IMR-90 (cell line): ENCODE measurements at regions of chr3 and their contacts with region 1.

Region 1: GRCh38 chr3:195806211-195806915 is 5.4 kb downstream of the MUC4 start:
- DNase-seq: no peak
- ATAC-seq: no peak
- H3K4me3 ChIP-seq: no peak overlapping the region
- H3K27ac ChIP-seq: no peak overlapping the region
- H3K4me1 ChIP-seq: no peaks in the 10 kb centered on the region
- H3K27me3 ChIP-seq: peaks cover 62% of the 10 kb centered on the region
- CTCF ChIP-seq: no peak
- POLR2A ChIP-seq: no peak
- RAD21 ChIP-seq: no peak

Region 2: GRCh38 chr3:195732940-195733339 is 73.4 kb before region 1 on chr3:
- CTCF ChIA-PET with region 1: no interaction called
- POLR2A ChIA-PET with region 1: no interaction called
- dilution Hi-C with region 1: no loop called
- in situ Hi-C with region 1: no loop called
- intact Hi-C with region 1: no loop called
- DNase-seq: peak; percentile 36
- ATAC-seq: peak; percentile 25
- H3K4me3 ChIP-seq: no peak overlapping the region
- H3K27ac ChIP-seq: no peak overlapping the region
- H3K4me1 ChIP-seq: no peaks in the 10 kb centered on the region
- H3K27me3 ChIP-seq: peaks cover 58% of the 10 kb centered on the region
- CTCF ChIP-seq: no peak
- POLR2A ChIP-seq: no peak
- RAD21 ChIP-seq: no peak

Region 3: DNA sequence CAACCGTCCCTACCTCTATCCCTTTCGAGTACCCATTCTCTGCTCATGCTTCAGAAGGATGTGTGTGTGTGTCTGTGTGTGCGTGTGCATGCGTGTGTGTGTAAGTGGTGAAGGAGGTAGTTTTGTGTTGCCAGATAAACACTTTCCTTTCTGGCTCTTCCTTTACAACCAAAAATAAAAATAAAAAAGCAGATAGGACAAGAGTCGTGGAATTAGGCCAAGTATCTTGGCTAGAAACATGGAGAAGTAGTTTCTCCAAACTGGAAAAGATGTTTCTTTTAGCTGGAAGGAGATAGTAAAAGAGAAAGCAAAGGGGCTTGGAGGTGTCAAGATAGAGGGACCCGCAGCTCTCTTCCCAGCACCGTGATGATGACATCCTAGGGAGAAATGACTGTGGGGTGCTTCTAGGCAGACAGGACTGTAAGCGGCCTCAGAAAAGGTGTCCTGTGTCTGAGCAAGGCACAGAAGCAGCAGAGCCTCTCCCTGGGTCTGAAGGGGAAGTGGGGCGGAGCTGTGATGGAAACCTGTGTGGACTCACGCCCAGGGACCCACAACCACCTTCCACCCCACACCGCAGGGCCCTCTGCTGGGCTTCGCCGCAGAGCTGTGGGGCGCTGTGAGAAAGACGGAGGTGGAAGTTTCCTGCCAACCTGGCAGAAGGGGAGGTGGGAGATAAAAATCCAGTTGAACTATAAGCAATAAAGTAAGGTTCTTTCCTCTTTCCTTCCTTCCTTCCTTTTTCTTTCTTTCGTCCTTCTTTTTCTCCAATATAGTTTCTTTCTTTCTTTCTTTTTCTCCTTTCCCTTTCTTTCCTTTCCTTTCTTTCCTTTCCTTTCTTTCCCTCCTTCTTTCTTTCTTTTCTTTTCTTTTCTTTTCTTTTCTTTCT is 50.3 kb before region 1 on chr3:
- CTCF ChIA-PET with region 1: no interaction called
- POLR2A ChIA-PET with region 1: no interaction called
- dilution Hi-C with region 1: no loop called
- in situ Hi-C with region 1: loop called (anchors 5 kb)
- intact Hi-C with region 1: no loop called
- DNase-seq: no peak
- ATAC-seq: no peak
- H3K4me3 ChIP-seq: no peak overlapping the region
- H3K27ac ChIP-seq: no peak overlapping the region
- H3K4me1 ChIP-seq: no peaks in the 10 kb centered on the region
- H3K27me3 ChIP-seq: peaks cover 49% of the 10 kb centered on the region
- CTCF ChIP-seq: no peak
- POLR2A ChIP-seq: no peak
- RAD21 ChIP-seq: no peak

Region 4: DNA sequence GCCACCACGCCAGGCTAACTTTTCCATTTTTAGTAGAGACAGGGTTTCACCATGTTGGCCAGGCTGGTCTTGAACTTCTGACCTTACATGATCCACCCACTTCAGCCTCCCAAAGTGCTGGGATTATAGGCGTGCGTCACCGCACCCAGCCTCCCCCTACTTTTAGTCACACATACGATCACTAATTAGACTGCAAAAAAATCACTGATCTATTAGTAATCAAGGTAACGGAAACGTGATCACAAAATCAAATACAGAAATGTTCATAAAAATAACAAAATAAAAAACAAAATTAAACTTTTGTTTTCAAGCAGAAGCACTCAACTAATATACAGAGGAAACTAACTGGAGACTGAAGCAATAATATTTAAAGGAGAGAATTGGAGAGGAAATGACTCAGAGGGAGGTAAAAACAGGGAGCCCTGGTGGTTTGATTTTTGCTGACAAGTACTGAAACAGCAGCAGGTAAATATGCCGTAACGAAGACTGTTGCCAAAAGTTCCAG is 757.4 kb after region 1 on chr3:
- CTCF ChIA-PET with region 1: no interaction called
- POLR2A ChIA-PET with region 1: no interaction called
- dilution Hi-C with region 1: no loop called
- in situ Hi-C with region 1: no loop called
- intact Hi-C with region 1: no loop called
- DNase-seq: peak; percentile 34
- ATAC-seq: no peak
- H3K4me3 ChIP-seq: no peak overlapping the region
- H3K27ac ChIP-seq: no peak overlapping the region
- H3K4me1 ChIP-seq: 0 out of 2 replicates have a peak, but pooled peaks cover 1% of the 10 kb centered on the region
- H3K27me3 ChIP-seq: no peaks in the 10 kb centered on the region
- CTCF ChIP-seq: no peak
- POLR2A ChIP-seq: no peak
- RAD21 ChIP-seq: no peak